Activated CD4-positive, alpha-beta memory T cell treated with anti-CD3 and anti-CD28 coated beads for 36 hours (primary cell): ENCODE measurements at regions of chrX and their contacts with region 1.

Region 1: DNA sequence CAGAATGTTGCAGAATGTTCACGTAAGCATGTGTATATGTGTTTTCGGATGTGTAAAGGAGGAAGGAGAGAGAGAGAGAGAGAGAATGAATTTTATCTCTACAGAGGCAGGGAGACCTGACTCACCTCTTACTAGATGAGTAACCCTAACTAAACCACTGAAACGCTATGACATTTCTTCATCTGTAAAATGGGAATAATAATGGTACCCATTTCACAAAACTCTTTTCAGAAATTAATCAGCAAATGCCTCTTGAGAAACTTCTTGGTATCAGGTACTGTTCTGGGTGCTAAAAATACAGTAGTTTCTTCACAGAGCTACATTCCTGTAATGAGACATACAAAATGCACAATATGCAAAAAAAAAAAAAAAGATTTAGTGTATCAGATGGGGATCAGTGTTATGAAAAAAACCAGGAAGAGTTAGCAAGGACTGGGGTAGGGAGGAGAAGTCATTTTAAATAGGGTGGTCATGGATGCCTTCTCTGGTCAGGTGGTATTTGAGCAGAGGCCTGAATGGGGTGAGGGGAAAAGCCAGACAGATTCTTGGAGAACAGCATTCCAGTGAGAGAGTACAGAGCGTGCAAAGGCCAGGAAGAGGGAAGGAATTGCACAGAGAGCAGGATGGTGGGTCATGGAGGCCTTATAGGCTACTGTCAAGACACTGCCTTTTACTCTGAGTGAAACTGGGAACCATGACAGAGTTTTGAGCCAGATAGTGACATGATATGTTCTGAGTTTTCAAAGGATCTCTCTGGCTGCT is 84.9 kb upstream of the SPANXB1 start:
- DNase-seq: no peak
- H3K4me3 Mint-ChIP-seq: no peak overlapping the region
- H3K27ac Mint-ChIP-seq: peak overlapping the region; percentile 79
- H3K4me1 Mint-ChIP-seq: peaks cover 24% of the 10 kb centered on the region
- H3K27me3 Mint-ChIP-seq: no peaks in the 10 kb centered on the region

Region 2: DNA sequence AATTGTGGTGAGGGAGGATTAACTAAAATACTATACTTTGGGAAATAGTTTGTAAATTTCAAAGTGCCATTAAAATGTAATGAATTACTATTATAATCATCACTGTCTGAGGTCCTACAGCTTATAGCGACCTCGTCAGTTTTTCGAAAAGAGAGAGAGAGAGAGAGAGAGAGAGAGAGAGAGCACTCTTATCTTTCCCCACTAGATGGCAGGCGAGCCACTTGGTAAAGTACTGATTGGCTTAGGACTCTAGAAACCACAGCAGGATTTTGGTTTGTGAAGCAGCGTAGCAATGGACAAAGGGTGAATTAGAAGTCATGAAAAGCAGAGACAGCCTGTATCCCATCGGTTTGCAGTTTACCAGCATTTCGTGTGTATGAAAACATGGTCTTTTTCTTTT is 155.5 kb before region 1 on chrX:
- CTCF ChIA-PET with region 1: interaction called, 7 read pairs
- POLR2A ChIA-PET with region 1: interaction called, 4 read pairs
- intact Hi-C with region 1: loop called (anchors 1 kb)
- DNase-seq: peak; percentile 38
- H3K4me3 Mint-ChIP-seq: no peak overlapping the region
- H3K27ac Mint-ChIP-seq: no peak overlapping the region
- H3K4me1 Mint-ChIP-seq: peaks cover 6% of the 10 kb centered on the region
- H3K27me3 Mint-ChIP-seq: peaks cover 5% of the 10 kb centered on the region

Region 3: GRCh38 chrX:140817942-140818341 is 99.6 kb before region 1 on chrX:
- CTCF ChIA-PET with region 1: interaction called, 3 read pairs
- POLR2A ChIA-PET with region 1: no interaction called
- intact Hi-C with region 1: loop called (anchors 1 kb)
- DNase-seq: no peak
- H3K4me3 Mint-ChIP-seq: no peak overlapping the region
- H3K27ac Mint-ChIP-seq: no peak overlapping the region
- H3K4me1 Mint-ChIP-seq: peaks cover 9% of the 10 kb centered on the region
- H3K27me3 Mint-ChIP-seq: no peaks in the 10 kb centered on the region

Region 4: GRCh38 chrX:141158084-141158483 is 240.5 kb after region 1 on chrX:
- CTCF ChIA-PET with region 1: no interaction called
- POLR2A ChIA-PET with region 1: no interaction called
- intact Hi-C with region 1: loop called (anchors 1 kb)
- DNase-seq: no peak
- H3K4me3 Mint-ChIP-seq: no peak overlapping the region
- H3K27ac Mint-ChIP-seq: no peak overlapping the region
- H3K4me1 Mint-ChIP-seq: peaks cover 13% of the 10 kb centered on the region
- H3K27me3 Mint-ChIP-seq: no peaks in the 10 kb centered on the region